ENCODE measurements at regions of chr4 and their contacts with region 1.

Region 1: GRCh38 chr4:121182296-121182695 is 18.2 kb upstream of the TNIP3 start:
- DNase-seq: peak; percentile 34
- H3K4me3 Mint-ChIP-seq: peak overlapping the region; percentile 82
- H3K27ac Mint-ChIP-seq: peak overlapping the region; percentile 93
- H3K4me1 Mint-ChIP-seq: peaks cover 72% of the 10 kb centered on the region
- H3K27me3 Mint-ChIP-seq: peaks cover 2% of the 10 kb centered on the region

Region 2: GRCh38 chr4:121139533-121140222 is 42.6 kb before region 1 on chr4:
- intact Hi-C with region 1: loop called (anchors 1 kb)
- DNase-seq: no peak
- H3K4me3 Mint-ChIP-seq: peak overlapping the region; percentile 31
- H3K27ac Mint-ChIP-seq: peak overlapping the region; percentile 69
- H3K4me1 Mint-ChIP-seq: peaks cover 41% of the 10 kb centered on the region
- H3K27me3 Mint-ChIP-seq: no peaks in the 10 kb centered on the region

Region 3: DNA sequence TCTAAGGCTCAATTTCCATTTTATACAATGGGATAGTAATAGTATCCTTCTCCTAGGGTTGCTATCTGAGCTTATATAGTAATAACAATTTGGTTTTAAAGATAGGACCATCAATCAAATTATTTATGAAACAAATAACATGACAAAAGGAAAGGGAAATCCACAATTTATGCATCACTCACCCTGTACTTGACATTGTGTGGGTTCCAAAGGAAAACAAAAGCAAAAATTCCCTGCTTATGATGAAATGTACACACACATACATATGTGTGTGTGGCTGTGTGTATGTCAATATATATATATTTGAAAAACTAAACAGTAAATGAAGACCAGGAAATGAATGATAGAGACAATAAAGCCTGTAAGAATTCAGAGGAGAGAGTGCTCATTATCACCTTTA is 15.3 kb before region 1 on chr4:
- intact Hi-C with region 1: loop called (anchors 1 kb)
- DNase-seq: no peak
- H3K4me3 Mint-ChIP-seq: no peak overlapping the region
- H3K27ac Mint-ChIP-seq: no peak overlapping the region
- H3K4me1 Mint-ChIP-seq: peaks cover 44% of the 10 kb centered on the region
- H3K27me3 Mint-ChIP-seq: peaks cover under 1% of the 10 kb centered on the region